ENCODE measurements at regions of chrX and their contacts with region 1.

Region 1: DNA sequence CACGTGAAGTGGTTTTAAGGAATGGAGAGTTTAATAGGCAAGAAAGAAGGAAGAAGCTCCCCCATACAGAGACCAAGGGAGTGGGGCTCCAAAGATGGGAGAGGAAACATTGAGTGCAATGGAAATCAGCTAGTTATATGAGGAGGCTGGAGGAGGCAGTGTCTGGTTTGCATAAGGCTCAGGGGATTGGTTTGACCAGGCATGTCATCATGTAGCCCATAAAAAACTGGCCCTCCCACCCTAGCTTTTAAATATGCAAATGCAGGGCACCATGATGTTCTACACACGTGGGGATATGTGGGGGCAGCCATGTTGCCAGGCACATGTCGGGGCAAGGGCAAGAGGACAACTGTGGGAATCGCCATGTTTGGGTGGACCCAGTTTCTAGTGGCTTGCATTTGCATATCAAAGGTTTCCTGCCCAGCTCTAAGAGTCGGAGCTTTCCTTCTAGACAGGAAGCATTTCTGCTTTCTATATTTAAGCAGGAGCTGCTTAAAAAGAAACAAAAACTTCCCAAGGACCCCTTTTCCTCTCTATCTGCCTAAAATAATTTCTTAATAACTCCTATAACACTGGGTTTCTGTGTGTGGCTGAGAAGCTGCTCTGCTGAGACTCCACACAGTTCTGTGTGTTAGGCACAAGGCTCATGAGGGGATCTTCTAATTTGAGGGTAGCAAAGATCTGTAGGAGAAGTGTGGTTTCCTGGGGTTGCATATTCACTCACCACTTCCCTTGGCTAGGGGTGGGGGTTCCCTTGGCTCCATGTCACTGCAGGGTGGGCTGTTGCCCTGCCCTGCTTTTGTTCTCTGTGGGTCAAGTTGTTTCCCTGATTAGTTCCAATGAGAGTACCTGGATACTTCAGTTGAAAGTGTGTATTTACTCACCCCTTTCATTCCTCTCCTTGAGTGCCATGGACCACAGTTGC is 113.5 kb downstream of the VSIG4 start:
- DNase-seq: peak; percentile 7 to 87 (median 38)
- ATAC-seq: peak; percentile 94
- H3K4me3 ChIP-seq: peak overlapping the region; percentile 67
- H3K27ac ChIP-seq: peak overlapping the region; percentile 100
- H3K4me1 ChIP-seq: peaks cover 9 to 13% of the 10 kb centered on the region in 2 experiments; a peak in 3 of 5 replicates
- H3K27me3 ChIP-seq: no peaks in the 10 kb centered on the region
- CTCF ChIP-seq: no peak
- EP300 ChIP-seq: peak; percentile 11; the same call in 1 of the 2 replicates
- POLR2A ChIP-seq: peak; percentile 94
- RAD21 ChIP-seq: no peak

Region 2: DNA sequence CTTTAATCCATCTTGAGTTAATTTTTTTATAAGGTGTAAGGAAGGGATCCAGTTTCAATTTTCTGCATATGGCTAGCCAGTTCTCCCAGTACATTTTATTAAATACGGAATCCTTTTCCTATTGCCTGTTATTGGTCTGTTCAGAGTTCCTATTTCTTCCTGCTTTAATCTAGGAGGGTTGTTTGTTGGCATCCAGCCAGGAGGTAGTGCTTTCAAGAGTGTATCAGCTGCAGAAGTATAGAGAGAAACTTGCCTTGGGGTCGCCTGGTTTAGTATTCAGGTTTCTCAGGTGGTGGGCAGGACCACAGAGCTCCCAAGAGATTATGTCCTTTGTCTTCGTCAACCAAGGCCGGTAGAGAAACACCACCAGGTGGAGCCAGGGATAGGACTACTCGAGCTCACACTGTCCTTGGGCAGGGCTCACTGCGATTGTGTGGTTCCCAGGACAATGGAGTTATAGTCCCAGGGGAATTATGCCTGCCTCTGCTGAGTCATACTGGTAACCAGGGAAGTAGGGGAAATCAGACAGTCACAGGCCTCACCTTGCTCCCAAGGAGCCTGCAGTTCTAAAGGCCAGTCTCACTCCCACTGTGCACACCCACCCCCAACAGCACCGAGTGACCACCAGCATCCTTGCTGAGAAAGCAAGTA is 54.6 kb before region 1 on chrX:
- CTCF ChIA-PET with region 1: no interaction called
- POLR2A ChIA-PET with region 1: no interaction called
- in situ Hi-C with region 1: no loop called
- intact Hi-C with region 1: loop called (anchors 5 kb)
- DNase-seq: peak; percentile 24 to 68 (median 44)
- ATAC-seq: peak; percentile 83
- H3K4me3 ChIP-seq: no peak overlapping the region
- H3K27ac ChIP-seq: no peak overlapping the region
- H3K4me1 ChIP-seq: peaks cover 27 to 30% of the 10 kb centered on the region in 2 experiments; a peak in 4 of 5 replicates
- H3K27me3 ChIP-seq: no peaks in the 10 kb centered on the region
- CTCF ChIP-seq: peak; percentile 45 to 57 (median 54); a peak in 5 of 6 replicates
- EP300 ChIP-seq: no peak
- POLR2A ChIP-seq: no peak
- RAD21 ChIP-seq: peak; percentile 40 to 70

Region 3: DNA sequence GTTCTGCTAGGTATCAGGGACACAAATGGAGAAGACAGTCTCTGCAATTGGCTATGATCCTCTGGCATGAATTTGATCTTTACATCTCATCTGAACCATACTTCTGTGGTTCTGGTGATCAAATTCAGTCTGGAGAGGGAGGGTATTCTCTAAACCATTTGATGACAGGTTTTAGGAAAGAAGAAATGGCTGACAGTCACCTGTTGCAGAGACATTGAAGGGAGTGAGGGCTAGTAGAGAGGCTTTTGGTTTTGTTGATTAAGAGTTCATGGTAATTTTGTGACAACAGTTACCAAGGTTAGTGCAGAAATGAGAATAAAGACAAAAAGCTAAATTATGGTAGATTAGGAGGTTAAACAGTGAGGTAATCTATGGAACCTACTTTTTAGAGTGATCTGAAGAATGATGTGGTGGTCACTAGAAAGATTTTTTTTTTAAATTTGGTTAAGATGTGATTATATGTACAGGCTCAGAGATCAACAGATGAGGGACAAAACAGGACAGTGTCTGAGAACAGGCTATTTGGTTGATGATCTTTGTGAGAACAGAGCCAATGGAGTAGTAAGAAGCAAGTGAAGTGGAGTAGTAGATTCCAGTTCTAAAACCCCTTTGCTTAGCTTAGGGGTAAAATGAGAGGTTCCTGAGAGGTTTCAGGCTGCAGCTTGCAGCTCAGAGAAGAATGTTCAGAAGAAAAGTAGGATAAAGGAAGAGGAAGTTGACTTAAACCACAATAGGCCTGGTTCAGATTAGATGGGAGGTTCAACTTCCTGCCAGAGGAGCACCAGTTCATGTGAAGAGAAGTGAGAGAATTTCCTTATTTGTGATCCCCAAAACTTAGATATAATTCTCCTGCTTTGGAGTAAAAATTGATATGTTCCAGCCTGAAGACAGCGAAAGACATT is 78.8 kb after region 1 on chrX:
- CTCF ChIA-PET with region 1: no interaction called
- POLR2A ChIA-PET with region 1: no interaction called
- in situ Hi-C with region 1: no loop called
- intact Hi-C with region 1: loop called (anchors 5 kb)
- DNase-seq: peak in 2 of 4 experiments; percentile 41 to 75
- ATAC-seq: peak; percentile 51
- H3K4me3 ChIP-seq: no peak overlapping the region
- H3K27ac ChIP-seq: peak overlapping the region; percentile 90
- H3K4me1 ChIP-seq: peaks cover 6 to 74% of the 10 kb centered on the region in 2 experiments; a peak in 3 of 5 replicates
- H3K27me3 ChIP-seq: no peaks in the 10 kb centered on the region
- CTCF ChIP-seq: no peak
- EP300 ChIP-seq: peak; percentile 84
- POLR2A ChIP-seq: peak; percentile 53; the same call in 1 of the 2 replicates
- RAD21 ChIP-seq: 0 out of 4 replicates have a peak, but pooled peaks of 1 of the 2 experiments have one; percentile 4

Measured in K562 (cell line).